ENCODE measurements at regions of chr14 and their contacts with region 1.

Region 1: DNA sequence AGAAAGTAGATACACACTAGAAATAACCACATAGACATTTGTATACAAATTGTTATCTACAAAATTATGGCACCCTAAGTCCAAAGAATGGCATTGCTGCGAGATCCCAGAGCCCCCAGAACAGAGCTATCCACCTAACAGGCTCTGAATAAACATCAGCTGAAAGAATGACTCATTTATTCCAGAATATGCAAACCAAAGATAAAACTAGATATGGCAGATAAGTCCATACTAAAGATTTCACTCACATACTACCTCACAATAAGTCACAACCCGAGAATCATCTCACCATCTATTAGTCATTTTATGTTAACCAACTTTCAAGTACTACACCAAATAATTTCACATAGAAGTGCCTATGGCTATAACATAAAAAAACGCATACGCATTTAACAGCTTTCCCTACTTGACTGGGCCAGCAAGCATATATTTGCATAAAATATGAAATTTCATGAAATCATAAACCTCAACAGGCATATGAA is 5.6 kb downstream of the CNIH1 start:
- DNase-seq: no peak
- H3K4me3 ChIP-seq: no peak overlapping the region
- H3K27ac ChIP-seq: no peak overlapping the region
- H3K4me1 ChIP-seq: peaks cover 0 to 9% (median 6%) of the 10 kb centered on the region in 4 experiments; a peak in 5 of 7 replicates
- H3K27me3 ChIP-seq: no peaks in the 10 kb centered on the region
- CTCF ChIP-seq: no peak
- EP300 ChIP-seq: no peak
- POLR2A ChIP-seq: no peak
- RAD21 ChIP-seq: no peak

Region 2: DNA sequence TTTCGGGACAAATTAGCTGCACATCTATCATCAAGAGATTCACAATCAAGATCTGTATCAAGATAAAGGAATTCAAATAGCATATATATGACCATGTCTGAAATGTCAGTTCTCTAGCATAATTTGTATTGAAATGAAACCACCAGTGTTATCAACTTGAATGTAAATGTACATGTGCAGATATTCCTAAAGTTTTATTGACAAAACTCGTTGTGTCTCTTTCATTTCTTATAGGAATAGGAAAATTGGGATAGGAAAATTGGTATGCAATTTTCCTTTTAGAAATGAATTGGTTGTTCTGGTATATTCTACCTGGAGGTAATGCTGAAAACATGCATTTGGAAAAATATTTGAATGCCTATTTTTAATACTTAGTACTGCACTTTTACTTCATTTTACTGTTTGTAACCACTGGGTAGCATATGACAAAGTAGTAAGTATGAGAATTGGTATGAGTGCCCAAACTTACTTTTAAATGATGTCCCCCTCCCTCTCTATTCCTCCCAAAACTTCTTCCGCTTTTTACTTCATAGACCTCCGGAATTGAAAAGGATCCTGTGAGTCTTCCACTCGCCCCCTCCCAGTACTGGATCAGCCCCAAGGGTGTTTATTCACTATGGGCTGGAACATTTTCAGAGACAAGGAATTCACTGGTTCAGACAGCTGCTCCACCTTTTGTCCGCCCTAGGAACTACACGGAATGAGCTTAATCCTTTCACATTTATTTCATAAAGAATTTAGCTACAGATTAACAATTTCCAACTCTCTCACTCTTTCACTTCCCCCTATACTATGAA is 15.3 kb before region 1 on chr14:
- CTCF ChIA-PET with region 1: interaction called, 9 read pairs
- POLR2A ChIA-PET with region 1: interaction called, 10 read pairs
- DNase-seq: peak; percentile 17 to 59
- H3K4me3 ChIP-seq: no peak overlapping the region
- H3K27ac ChIP-seq: no peak overlapping the region
- H3K4me1 ChIP-seq: no peaks in the 10 kb centered on the region
- H3K27me3 ChIP-seq: no peaks in the 10 kb centered on the region
- CTCF ChIP-seq: peak in 2 of 3 experiments; percentile 67 to 71; a peak in 3 of 4 replicates
- EP300 ChIP-seq: no peak
- POLR2A ChIP-seq: no peak
- RAD21 ChIP-seq: peak; percentile 58 to 71

Region 3: DNA sequence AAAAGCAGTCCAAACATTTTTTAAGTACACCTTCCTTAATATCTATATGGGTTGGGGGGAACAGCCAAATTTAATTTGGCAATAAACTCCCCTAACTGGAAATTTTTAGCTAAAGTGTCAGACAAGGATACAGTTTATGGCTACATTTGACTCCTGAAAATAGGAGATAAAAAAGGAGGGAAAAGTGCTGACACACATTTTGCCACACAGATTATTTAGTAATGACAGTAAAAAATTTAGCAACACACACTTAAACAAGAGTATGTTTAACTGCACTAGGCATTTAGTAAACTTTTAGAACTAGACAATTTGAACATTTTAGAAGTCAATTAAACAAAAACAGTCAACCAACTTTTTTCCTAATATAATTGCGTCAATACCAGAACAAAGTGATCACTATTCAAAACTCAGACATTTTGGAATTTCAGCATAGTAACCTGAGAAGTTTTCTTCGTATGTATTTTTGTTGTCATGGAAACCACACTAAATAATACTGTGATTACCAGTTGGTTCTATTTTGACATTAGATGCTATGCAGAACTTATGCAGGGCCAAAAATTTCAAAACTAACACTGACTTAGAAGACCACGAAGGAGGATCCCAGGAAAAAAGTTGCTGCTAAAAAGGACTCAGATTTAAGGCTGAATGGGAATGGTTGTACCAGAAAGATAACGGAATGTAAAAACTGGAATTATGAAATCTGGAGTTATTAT is 39.8 kb after region 1 on chr14:
- CTCF ChIA-PET with region 1: no interaction called
- POLR2A ChIA-PET with region 1: no interaction called
- DNase-seq: no peak
- H3K4me3 ChIP-seq: no peak overlapping the region
- H3K27ac ChIP-seq: no peak overlapping the region
- H3K4me1 ChIP-seq: no peaks in the 10 kb centered on the region; a peak in 1 of 7 replicates
- H3K27me3 ChIP-seq: no peaks in the 10 kb centered on the region
- CTCF ChIP-seq: no peak
- EP300 ChIP-seq: no peak
- POLR2A ChIP-seq: no peak
- RAD21 ChIP-seq: no peak

Region 4: GRCh38 chr14:54509546-54510501 is 74.3 kb after region 1 on chr14 and contains the start of gene CGRRF1:
- CTCF ChIA-PET with region 1: no interaction called
- POLR2A ChIA-PET with region 1: no interaction called
- DNase-seq: peak; percentile 96 to 99
- H3K4me3 ChIP-seq: peak within 1 kb of the TSS; percentile 91 to 98 (median 92)
- H3K27ac ChIP-seq: peak within 1 kb of the TSS; percentile 84
- H3K4me1 ChIP-seq: peaks cover 0 to 4% (median under 1%) of the 10 kb centered on the region in 4 experiments; a peak in 2 of 7 replicates
- H3K27me3 ChIP-seq: no peaks in the 10 kb centered on the region
- CTCF ChIP-seq: peak; percentile 44 to 52 (median 47)
- EP300 ChIP-seq: peak in 1 of 2 experiments; percentile 65; a peak in 1 of 3 replicates
- POLR2A ChIP-seq: peak; percentile 55 to 85
- RAD21 ChIP-seq: no peak; a peak in 1 of 4 replicates
- total RNA-seq, gene CGRRF1: 17.8 and 20.2 TPM in 2 replicates

Measured in H1 (cell line).